Activated T-helper 1 cell treated with anti-CD3 and anti-CD28 coated beads, Interleukin-12 subunit alpha, Interleukin-12 subunit beta, Interleukin-2, Interleukin-4 antibody, amounts not matched to agents 30 ng/mL and 10 ng/mL and 1 ng/mL, durations not matched to agents 14 hours and 24 hours and 36 hours (primary cell): ENCODE measurements at regions of chr12 and their contacts with region 1.

Region 1: GRCh38 chr12:110468212-110469048 is at the starts of genes FAM216A and GPN3:
- DNase-seq: peak; percentile 96
- H3K4me3 Mint-ChIP-seq: peak within 1 kb of the TSS; percentile 96
- H3K27ac Mint-ChIP-seq: peak within 1 kb of the TSS; percentile 95
- H3K4me1 Mint-ChIP-seq: peaks cover 31% of the 10 kb centered on the region
- H3K27me3 Mint-ChIP-seq: no peaks in the 10 kb centered on the region
- total RNA-seq, gene FAM216A: 40.8 and 45.9 TPM in 2 replicates
- total RNA-seq, gene GPN3: 50.3 and 55.5 TPM in 2 replicates

Region 2: GRCh38 chr12:110449799-110450497 is 18.5 kb before region 1 on chr12 and contains the start of gene ARPC3:
- intact Hi-C with region 1: loop called (anchors 1 kb)
- DNase-seq: peak; percentile 94
- H3K4me3 Mint-ChIP-seq: peak within 1 kb of the TSS; percentile 100
- H3K27ac Mint-ChIP-seq: peak within 1 kb of the TSS; percentile 100
- H3K4me1 Mint-ChIP-seq: peaks cover 42% of the 10 kb centered on the region
- H3K27me3 Mint-ChIP-seq: no peaks in the 10 kb centered on the region
- total RNA-seq, gene ARPC3: 279 and 290 TPM in 2 replicates

Region 3: GRCh38 chr12:110577717-110578521 is 109.5 kb after region 1 on chr12:
- intact Hi-C with region 1: loop called (anchors 1 kb)
- DNase-seq: peak; percentile 51
- H3K4me3 Mint-ChIP-seq: peak overlapping the region; percentile 95
- H3K27ac Mint-ChIP-seq: peak overlapping the region; percentile 98
- H3K4me1 Mint-ChIP-seq: peaks cover 70% of the 10 kb centered on the region
- H3K27me3 Mint-ChIP-seq: no peaks in the 10 kb centered on the region

Region 4: DNA sequence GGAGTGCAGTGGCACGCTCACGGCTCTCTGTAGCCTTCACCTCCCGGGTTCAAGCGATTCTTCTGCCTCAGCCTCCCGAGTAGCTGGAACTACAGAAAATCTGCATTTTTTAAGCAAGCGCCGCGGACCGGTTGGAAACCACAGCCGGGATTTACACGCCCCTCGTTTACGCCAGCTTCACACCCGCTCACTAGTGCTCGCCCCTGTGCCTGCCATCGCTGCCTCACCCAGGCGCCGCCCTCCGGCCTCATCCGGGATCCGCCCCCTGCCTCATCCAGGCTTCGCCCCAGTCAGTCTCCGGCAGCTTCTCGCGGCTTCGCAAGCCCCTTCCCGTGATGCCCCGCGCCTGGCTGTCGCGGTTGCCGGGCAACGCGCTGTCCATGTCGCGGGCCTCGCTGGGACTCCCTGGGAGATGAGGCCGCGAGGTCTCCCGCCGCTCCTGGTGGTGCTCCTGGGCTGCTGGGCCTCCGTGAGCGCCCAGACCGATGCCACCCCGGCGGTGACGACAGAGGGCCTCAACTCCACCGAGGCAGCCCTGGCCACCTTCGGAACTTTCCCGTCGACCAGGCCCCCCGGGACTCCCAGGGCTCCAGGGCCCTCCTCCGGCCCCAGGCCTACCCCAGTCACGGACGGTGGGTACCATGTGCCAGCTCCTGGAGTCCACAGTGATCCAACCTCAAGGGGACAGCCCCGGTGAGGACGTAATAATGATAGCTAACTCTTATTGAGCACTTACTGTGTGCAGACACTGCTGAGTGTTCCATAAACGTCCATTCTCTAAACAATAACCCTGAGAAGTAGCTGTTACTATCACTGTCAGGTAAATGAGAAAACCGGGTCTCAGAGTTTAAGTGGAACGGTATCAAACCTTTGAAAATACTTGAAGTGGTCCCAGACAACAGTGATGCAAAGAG is 145.6 kb after region 1 on chr12 and contains the start of gene TCTN1:
- intact Hi-C with region 1: loop called (anchors 1 kb)
- DNase-seq: peak; percentile 98
- H3K4me3 Mint-ChIP-seq: peak within 1 kb of the TSS; percentile 83
- H3K27ac Mint-ChIP-seq: peak within 1 kb of the TSS; percentile 81
- H3K4me1 Mint-ChIP-seq: peaks cover 8% of the 10 kb centered on the region
- H3K27me3 Mint-ChIP-seq: peaks cover 4% of the 10 kb centered on the region
- total RNA-seq, gene TCTN1: 7.6 and 8.8 TPM in 2 replicates

Region 5: GRCh38 chr12:110776410-110776809 is 308.0 kb after region 1 on chr12:
- intact Hi-C with region 1: loop called (anchors 1 kb)
- DNase-seq: peak; percentile 43
- H3K4me3 Mint-ChIP-seq: peak overlapping the region; percentile 40
- H3K27ac Mint-ChIP-seq: peak overlapping the region; percentile 99
- H3K4me1 Mint-ChIP-seq: peaks cover 72% of the 10 kb centered on the region
- H3K27me3 Mint-ChIP-seq: no peaks in the 10 kb centered on the region